T-cell (primary cell): ENCODE measurements at regions of chr15 and their contacts with region 1.

Region 1: DNA sequence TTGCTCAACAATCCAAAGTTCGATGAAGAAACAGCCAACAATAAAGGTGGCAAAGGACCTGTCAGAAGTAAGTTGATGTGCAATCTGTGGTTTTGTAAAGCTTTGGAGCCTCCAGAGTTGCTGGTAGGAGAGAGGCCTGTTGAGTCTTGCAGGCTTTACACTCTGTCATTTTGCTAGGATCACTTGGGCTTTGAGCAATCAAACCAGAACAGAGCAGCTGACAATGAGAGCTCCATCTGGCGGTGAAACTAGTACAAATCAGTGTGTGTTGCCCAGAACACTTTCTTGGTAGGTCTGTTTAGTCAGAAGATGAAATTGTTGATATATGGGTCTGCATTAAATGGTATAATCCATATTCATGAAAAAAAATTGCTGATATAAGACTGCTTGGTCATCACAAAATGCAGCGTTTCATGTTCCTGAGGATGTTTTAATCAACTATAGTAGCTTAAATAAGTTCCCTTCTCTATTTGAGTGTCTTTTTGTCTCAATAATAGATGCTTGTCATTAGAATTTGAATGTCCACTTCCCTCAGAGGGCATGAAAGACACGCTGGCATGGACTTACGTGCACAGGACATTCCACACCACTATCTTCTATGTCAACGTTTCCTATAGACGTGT is 25.7 kb downstream of the TMOD2 start:
- DNase-seq: peak; percentile 5 to 84 (median 49)
- ATAC-seq: peak; percentile 54 to 83 (median 77)
- H3K4me3 ChIP-seq: no peak overlapping the region
- H3K4me3 Mint-ChIP-seq: no peak overlapping the region
- H3K27ac ChIP-seq: no peak overlapping the region
- H3K27ac Mint-ChIP-seq: no peak overlapping the region
- H3K4me1 ChIP-seq: no peaks in the 10 kb centered on the region
- H3K4me1 Mint-ChIP-seq: peaks cover 5 to 8% (median 6%) of the 10 kb centered on the region in 3 donors
- H3K27me3 ChIP-seq: no peaks in the 10 kb centered on the region
- H3K27me3 Mint-ChIP-seq: no peaks in the 10 kb centered on the region

Region 2: DNA sequence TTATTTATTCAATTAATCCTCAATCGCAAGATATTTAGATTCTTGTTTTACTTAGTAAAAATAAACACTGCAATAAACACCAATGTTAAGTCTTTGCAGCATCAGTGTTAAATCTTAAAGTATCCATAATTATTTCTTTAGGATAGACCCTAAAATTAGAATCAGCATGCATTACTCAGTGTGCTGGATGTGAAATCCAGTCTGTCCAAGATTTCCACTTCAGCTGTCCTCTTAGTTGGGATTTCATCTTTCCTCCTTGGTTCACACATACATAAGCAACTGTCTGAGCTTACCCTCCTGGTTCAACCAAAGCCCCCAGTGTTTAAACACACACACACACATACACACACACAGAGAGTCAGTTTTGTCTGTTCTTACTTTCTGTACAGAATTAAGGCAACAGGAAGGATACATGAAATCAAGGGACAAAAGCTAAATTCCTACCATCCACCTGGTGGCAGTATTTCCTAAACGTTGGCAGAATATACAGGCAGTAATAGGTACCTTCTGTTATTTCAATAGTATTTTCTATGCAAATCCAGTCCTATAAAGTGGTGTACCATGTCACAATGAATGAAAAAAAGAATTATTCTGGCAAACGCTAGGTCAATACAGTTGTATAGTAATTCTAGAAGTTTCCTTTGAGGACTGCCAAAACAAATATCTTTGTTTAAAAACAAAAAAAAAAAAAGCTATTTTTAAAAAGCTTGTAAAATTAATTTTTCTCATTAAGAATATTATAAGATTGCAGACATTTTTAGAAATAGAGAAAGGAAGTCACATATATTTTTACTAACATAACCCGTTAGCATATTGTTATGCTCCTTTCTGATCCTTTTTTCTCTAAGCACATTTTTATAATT is 127.2 kb before region 1 on chr15:
- CTCF ChIA-PET with region 1: interaction called, 41 to 211 read pairs
- POLR2A ChIA-PET with region 1: interaction called in 1 of 2 experiments, 8 read pairs
- DNase-seq: peak in 29 of 35 experiments; percentile 0 to 86 (median 29)
- ATAC-seq: peak; percentile 57 to 82 (median 74)
- H3K4me3 ChIP-seq: no peak overlapping the region
- H3K4me3 Mint-ChIP-seq: no peak overlapping the region
- H3K27ac ChIP-seq: no peak overlapping the region
- H3K27ac Mint-ChIP-seq: no peak overlapping the region
- H3K4me1 ChIP-seq: no peaks in the 10 kb centered on the region
- H3K4me1 Mint-ChIP-seq: no peaks in the 10 kb centered on the region
- H3K27me3 ChIP-seq: no peaks in the 10 kb centered on the region
- H3K27me3 Mint-ChIP-seq: peaks cover 0 to 5% of the 10 kb centered on the region in 2 donors

Region 3: DNA sequence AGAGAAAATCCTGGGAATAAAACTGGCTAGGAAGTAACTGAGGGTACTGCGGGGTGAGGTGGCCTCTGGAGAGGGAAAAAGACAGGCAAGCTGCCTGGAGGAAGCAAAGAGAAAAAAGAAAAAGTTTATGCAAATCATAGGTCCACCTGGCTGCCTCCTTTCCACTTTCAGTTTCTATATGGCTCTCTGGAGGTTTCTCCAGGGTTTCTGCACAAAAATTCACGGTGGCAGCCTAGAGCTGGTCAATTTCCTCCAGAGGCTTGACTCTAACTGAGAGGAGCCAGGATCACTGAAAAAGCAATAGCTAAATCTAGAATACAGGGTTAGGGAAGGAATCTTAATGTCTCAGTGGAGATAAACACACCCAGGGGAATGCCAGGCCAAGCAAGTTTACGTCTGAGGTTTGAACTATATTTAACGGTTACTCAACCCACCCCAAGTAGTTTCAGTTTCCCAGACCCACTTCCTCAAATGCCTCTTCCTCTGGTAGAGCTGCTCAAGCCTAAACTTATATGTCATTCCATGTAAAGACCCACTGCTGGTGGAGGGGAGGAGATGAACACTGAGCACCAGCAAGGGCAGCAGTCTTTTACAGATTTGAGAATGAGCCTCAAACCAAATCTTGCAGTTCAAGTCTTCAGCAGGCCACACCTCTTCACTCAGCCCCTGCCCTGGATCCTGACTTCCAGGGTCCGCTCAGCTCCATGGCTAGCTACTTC is 45.4 kb before region 1 on chr15:
- CTCF ChIA-PET with region 1: interaction called, 11 to 20 read pairs
- POLR2A ChIA-PET with region 1: no interaction called
- DNase-seq: peak in 28 of 35 experiments; percentile 7 to 80 (median 36)
- ATAC-seq: peak; percentile 65 to 81 (median 66)
- H3K4me3 ChIP-seq: peak overlapping the region; percentile 35 to 39
- H3K4me3 Mint-ChIP-seq: peak overlapping the region; percentile 79 to 84 (median 83)
- H3K27ac ChIP-seq: peak overlapping the region; percentile 92
- H3K27ac Mint-ChIP-seq: peak overlapping the region; percentile 95 to 97
- H3K4me1 ChIP-seq: peaks cover 51 to 76% of the 10 kb centered on the region in 2 experiments
- H3K4me1 Mint-ChIP-seq: peaks cover 87 to 93% (median 91%) of the 10 kb centered on the region in 3 donors
- H3K27me3 ChIP-seq: no peaks in the 10 kb centered on the region
- H3K27me3 Mint-ChIP-seq: no peaks in the 10 kb centered on the region

Region 4: DNA sequence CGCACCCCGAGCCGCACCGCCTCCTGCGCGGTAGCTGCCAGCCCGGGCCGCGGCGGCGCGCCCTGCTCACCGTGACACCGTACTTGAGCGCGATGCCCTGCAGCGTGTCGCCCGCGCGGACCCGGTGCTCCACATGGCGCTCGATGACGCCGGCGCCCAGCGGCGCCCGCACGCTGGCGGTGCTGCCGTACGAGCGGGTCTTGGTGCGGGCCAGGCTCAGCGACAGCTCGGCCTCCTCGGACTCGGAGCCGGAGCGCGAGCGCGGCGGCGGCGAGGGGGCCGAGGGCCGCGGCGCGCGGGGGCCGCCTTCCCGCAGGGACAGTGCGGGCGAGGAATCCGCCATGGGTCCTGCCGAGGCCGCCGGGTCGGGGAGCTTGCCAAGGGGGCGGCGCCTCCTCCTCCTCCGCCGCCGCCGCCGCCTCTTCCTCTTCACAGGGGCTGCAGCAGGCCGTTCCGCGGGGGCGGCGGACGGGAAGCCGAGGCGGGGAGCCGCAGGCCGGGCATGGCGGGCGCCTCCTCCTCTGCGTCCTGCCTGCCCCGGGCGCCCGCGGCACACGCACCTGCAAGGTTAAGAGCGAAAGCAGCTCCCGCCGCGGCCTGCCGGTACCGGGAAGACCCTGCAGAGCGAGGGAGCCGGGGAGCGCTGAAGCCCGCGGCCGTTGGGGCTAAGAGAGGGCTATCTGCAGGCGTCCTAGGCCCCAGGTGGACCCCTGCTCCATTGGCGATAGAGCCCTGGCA is 39.6 kb before region 1 on chr15 and contains the start of gene LYSMD2:
- CTCF ChIA-PET with region 1: interaction called, 11 to 20 read pairs
- POLR2A ChIA-PET with region 1: no interaction called
- DNase-seq: peak; percentile 21 to 78 (median 57)
- ATAC-seq: peak; percentile 67 to 79 (median 74)
- H3K4me3 ChIP-seq: peak within 1 kb of the TSS; percentile 62 to 67
- H3K4me3 Mint-ChIP-seq: peak within 1 kb of the TSS; percentile 85 to 91 (median 90)
- H3K27ac ChIP-seq: peak within 1 kb of the TSS; percentile 90
- H3K27ac Mint-ChIP-seq: peak within 1 kb of the TSS; percentile 97
- H3K4me1 ChIP-seq: peaks cover 41 to 54% of the 10 kb centered on the region in 2 experiments
- H3K4me1 Mint-ChIP-seq: peaks cover 60 to 65% (median 63%) of the 10 kb centered on the region in 3 donors
- H3K27me3 ChIP-seq: no peaks in the 10 kb centered on the region
- H3K27me3 Mint-ChIP-seq: no peaks in the 10 kb centered on the region
- total RNA-seq, gene LYSMD2: 16.6 to 36.2 (median 26.2) TPM

Region 5: GRCh38 chr15:51982013-51982769 is 205.1 kb after region 1 on chr15:
- CTCF ChIA-PET with region 1: interaction called in 1 of 2 experiments, 10 read pairs
- POLR2A ChIA-PET with region 1: no interaction called
- DNase-seq: peak in 29 of 35 experiments; percentile 3 to 80 (median 16)
- ATAC-seq: peak; percentile 88 to 98 (median 96)
- H3K4me3 ChIP-seq: no peak overlapping the region
- H3K4me3 Mint-ChIP-seq: peak overlapping the region; percentile 48 to 68 (median 67)
- H3K27ac ChIP-seq: no peak overlapping the region
- H3K27ac Mint-ChIP-seq: peak overlapping the region; percentile 88 to 90
- H3K4me1 ChIP-seq: peaks cover 6 to 9% of the 10 kb centered on the region in 2 experiments
- H3K4me1 Mint-ChIP-seq: peaks cover 10 to 15% (median 11%) of the 10 kb centered on the region in 3 donors
- H3K27me3 ChIP-seq: peaks cover 0 to 5% of the 10 kb centered on the region in 2 experiments
- H3K27me3 Mint-ChIP-seq: no peaks in the 10 kb centered on the region

Region 6: DNA sequence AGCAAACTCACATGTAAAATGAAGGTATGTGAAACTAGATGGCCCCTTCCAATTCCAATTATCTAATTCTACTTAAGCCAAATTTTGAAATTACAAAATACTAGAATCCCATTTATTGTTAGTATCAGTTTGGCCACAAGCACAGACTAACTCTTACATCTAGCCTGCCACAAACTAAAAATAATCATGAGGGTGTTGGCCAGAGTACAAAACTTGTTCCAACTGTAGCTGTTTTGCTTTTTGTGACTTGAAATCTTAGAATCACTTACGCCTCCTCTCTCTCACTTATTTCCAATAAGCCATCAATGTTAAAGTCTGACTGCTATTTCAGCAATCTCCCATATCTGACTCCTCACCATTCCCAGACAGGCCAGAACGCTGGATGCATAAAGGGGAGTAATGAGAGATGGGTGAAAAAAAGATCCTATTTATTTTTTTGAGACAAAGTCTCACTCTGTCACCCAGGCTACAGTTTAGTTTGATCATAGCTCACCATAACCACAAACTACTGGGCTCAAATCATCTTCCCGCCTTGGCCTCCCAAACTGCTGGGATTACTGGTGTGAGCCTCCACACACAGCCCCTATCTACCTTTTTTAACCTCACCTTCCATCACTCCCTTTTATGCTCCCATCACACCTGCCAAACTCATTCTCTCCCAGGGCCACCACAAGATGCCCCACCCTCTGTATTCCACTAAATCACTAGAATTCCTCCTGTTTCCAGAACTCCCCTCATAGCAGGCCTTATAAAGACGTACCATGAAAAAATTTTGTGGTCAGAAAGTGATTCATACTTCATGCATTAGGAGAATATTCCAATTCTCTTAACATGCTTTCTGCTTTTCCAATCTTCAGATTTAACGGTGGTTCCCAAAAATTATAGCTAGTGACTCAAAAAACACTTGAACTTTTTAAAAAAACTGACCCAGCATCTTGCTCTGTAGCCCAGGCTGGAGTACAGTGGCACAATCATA is 865.6 kb after region 1 on chr15:
- CTCF ChIA-PET with region 1: no interaction called
- POLR2A ChIA-PET with region 1: no interaction called
- DNase-seq: no peak
- ATAC-seq: no peak
- H3K4me3 ChIP-seq: no peak overlapping the region
- H3K4me3 Mint-ChIP-seq: no peak overlapping the region
- H3K27ac ChIP-seq: no peak overlapping the region
- H3K27ac Mint-ChIP-seq: peak overlapping the region in 1 of 2 donors; percentile 22
- H3K4me1 ChIP-seq: no peaks in the 10 kb centered on the region
- H3K4me1 Mint-ChIP-seq: peaks cover 11 to 20% (median 18%) of the 10 kb centered on the region in 3 donors
- H3K27me3 ChIP-seq: no peaks in the 10 kb centered on the region
- H3K27me3 Mint-ChIP-seq: no peaks in the 10 kb centered on the region